T-cell (primary cell): ENCODE measurements at regions of chr3 and their contacts with region 1.

Region 1: DNA sequence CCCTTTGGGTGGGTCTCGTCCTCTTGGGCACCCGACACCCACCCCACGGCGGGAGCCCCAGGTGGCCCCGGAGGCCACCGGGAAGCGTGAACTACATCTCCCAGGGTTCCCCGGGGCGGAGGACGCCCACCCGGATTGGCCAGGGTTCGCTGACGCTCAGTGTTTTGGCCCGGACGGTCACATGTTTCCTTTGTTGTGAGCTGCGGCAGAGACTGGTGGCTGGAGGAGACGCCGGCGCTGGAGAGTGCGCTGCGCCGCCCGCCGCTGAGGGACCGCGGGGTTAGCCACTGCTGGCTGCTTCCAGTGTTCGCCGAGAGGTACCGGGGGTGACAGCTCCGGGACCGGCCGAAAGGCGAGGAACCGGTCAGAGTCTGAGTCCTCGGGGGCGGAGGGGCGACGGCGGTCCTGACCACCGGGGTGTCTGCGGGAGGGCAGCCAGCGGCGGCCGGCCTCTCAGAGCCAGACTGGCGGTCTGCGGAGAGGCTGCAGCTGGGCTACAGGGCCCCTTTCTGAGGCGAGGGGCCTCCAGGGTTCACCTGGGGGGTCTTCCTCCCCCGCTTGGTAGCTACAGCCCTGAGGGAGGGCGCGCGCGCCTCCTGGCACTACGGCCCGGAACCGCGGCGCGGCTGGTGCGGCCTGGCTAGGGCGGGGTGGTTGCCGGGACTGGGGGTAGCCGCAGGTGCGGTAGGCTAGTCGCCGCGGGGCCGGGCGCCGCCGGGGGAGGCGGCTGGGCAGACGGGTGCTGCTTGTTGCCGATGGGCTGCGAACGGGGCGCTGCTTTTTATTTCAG is at the start of gene KLHL24:
- DNase-seq: peak; percentile 78 to 93 (median 86)
- ATAC-seq: peak; percentile 79 to 81 (median 80)
- H3K4me3 ChIP-seq: peak within 1 kb of the TSS; percentile 85 to 86
- H3K4me3 Mint-ChIP-seq: peak within 1 kb of the TSS; percentile 91 to 92 (median 91)
- H3K27ac ChIP-seq: peak within 1 kb of the TSS; percentile 91
- H3K27ac Mint-ChIP-seq: peak within 1 kb of the TSS; percentile 93 to 94
- H3K4me1 ChIP-seq: peaks cover 8 to 26% of the 10 kb centered on the region in 2 experiments
- H3K4me1 Mint-ChIP-seq: peaks cover 35 to 39% (median 38%) of the 10 kb centered on the region in 3 donors
- H3K27me3 ChIP-seq: no peaks in the 10 kb centered on the region
- H3K27me3 Mint-ChIP-seq: no peaks in the 10 kb centered on the region
- total RNA-seq, gene KLHL24: 83.3 to 145 (median 101) TPM

Region 2: DNA sequence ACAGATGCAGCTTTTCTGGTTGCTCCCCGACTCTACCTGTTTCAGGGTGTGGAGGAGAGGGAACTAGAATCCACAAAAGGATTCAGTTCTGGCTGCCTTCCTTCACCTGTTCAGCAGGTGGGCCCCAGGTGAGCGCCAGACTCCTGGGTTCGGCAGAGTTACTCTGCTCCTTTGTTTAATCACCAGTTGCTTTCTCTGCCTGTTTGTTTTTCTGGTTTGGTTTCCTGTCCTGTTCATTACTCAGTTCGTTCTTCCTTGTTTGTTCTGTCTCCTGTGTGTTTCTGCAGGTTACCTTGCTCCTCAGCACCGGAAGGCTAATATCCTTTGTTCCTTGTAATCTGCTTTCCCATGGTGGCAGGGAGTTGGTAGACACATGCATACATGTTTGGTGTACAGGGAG is 1350.8 kb before region 1 on chr3:
- CTCF ChIA-PET with region 1: no interaction called
- POLR2A ChIA-PET with region 1: no interaction called
- DNase-seq: no peak
- ATAC-seq: no peak
- H3K4me3 ChIP-seq: no peak overlapping the region
- H3K4me3 Mint-ChIP-seq: no peak overlapping the region
- H3K27ac ChIP-seq: no peak overlapping the region
- H3K27ac Mint-ChIP-seq: no peak overlapping the region
- H3K4me1 ChIP-seq: no peaks in the 10 kb centered on the region
- H3K4me1 Mint-ChIP-seq: no peaks in the 10 kb centered on the region
- H3K27me3 ChIP-seq: no peaks in the 10 kb centered on the region
- H3K27me3 Mint-ChIP-seq: peaks cover 0 to 3% of the 10 kb centered on the region in 2 donors

Region 3: GRCh38 chr3:183653209-183654064 is 17.8 kb after region 1 on chr3:
- CTCF ChIA-PET with region 1: interaction called in 1 of 2 experiments, 3 read pairs
- POLR2A ChIA-PET with region 1: interaction called, 10 read pairs
- DNase-seq: peak in 1 of 35 experiments; percentile 25
- ATAC-seq: no peak
- H3K4me3 ChIP-seq: no peak overlapping the region
- H3K4me3 Mint-ChIP-seq: no peak overlapping the region
- H3K27ac ChIP-seq: no peak overlapping the region
- H3K27ac Mint-ChIP-seq: no peak overlapping the region
- H3K4me1 ChIP-seq: no peaks in the 10 kb centered on the region
- H3K4me1 Mint-ChIP-seq: peaks cover 22 to 24% (median 22%) of the 10 kb centered on the region in 3 donors
- H3K27me3 ChIP-seq: no peaks in the 10 kb centered on the region
- H3K27me3 Mint-ChIP-seq: no peaks in the 10 kb centered on the region

Region 4: GRCh38 chr3:183697610-183698317 is 62.1 kb after region 1 on chr3 and contains the start of gene YEATS2:
- CTCF ChIA-PET with region 1: interaction called in 1 of 2 experiments, 6 read pairs
- POLR2A ChIA-PET with region 1: interaction called, 6 to 20 read pairs
- DNase-seq: peak; percentile 25 to 81 (median 55)
- ATAC-seq: peak; percentile 87 to 90 (median 88)
- H3K4me3 ChIP-seq: peak within 1 kb of the TSS; percentile 80 to 96
- H3K4me3 Mint-ChIP-seq: peak within 1 kb of the TSS; percentile 67 to 96 (median 94)
- H3K27ac ChIP-seq: peak within 1 kb of the TSS; percentile 66
- H3K27ac Mint-ChIP-seq: peak within 1 kb of the TSS; percentile 86 to 94
- H3K4me1 ChIP-seq: peaks cover 10 to 21% of the 10 kb centered on the region in 2 experiments
- H3K4me1 Mint-ChIP-seq: peaks cover 34 to 45% (median 36%) of the 10 kb centered on the region in 3 donors
- H3K27me3 ChIP-seq: no peaks in the 10 kb centered on the region
- H3K27me3 Mint-ChIP-seq: no peaks in the 10 kb centered on the region
- total RNA-seq, gene YEATS2: 23.8 to 26.2 (median 25.2) TPM

Region 5: DNA sequence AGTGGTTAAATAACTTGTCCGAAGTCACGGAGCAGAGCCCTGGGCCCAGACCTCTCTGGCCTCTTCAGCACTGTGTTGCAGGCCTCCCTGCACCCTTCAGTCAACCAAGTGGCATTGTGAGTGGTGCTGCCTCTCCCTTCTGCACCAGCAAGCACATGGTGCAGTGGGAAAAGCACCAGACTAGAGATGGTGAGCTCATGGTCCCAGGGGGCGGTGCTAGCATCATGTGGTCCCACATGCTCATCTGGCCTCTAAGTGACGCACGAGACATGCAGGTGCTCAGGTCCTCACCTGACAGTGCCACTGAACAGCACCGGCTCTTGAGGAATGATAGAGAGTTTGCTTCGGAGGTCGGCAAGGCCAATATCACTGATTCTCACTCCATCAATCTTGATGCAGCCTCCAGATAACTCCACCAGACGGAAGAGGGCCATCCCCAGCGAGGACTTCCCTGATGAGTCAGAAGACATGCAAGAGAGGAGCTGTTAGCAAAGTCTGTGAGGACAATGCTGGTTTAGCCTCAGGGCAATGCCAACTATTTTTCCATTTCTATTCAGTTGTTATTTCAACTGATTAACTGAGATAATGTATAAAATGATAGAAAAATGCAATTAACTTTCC is 302.1 kb after region 1 on chr3:
- CTCF ChIA-PET with region 1: no interaction called
- POLR2A ChIA-PET with region 1: no interaction called
- DNase-seq: no peak
- ATAC-seq: no peak
- H3K4me3 ChIP-seq: no peak overlapping the region
- H3K4me3 Mint-ChIP-seq: no peak overlapping the region
- H3K27ac ChIP-seq: no peak overlapping the region
- H3K27ac Mint-ChIP-seq: no peak overlapping the region
- H3K4me1 ChIP-seq: no peaks in the 10 kb centered on the region
- H3K4me1 Mint-ChIP-seq: no peaks in the 10 kb centered on the region
- H3K27me3 ChIP-seq: no peaks in the 10 kb centered on the region
- H3K27me3 Mint-ChIP-seq: no peaks in the 10 kb centered on the region